GM23248 (cell line): ENCODE measurements at regions of chrX and their contacts with region 1.

Region 1: GRCh38 chrX:138775517-138775916 is 64.0 kb upstream of the FGF13 start:
- DNase-seq: peak; percentile 63
- H3K4me3 ChIP-seq: no peak overlapping the region
- H3K27ac ChIP-seq: no peak overlapping the region
- H3K4me1 ChIP-seq: peaks cover 5% of the 10 kb centered on the region; the same call in 1 of the 2 replicates
- H3K27me3 ChIP-seq: no peaks in the 10 kb centered on the region

Region 2: DNA sequence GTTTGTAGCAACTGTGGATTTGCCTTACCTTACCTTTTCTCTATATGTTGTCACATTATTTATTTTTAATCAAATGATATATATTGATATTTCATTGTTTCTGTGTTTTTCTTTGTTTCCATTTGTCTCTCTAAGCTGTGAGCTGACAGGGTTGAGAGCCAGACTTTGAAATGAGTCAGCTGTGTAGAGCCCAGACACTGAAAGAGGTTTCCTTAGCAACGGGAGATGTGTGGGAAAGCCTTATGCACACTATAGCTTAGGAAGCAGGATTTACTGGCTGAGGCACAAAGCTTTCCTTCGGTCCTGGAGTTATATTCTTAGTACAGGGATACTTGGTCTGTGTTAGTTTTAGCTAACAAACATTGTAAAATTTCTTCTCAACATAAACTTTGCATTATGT is 256.2 kb before region 1 on chrX:
- in situ Hi-C with region 1: no loop called
- DNase-seq: peak; percentile 9
- H3K4me3 ChIP-seq: no peak overlapping the region
- H3K27ac ChIP-seq: no peak overlapping the region
- H3K4me1 ChIP-seq: no peaks in the 10 kb centered on the region
- H3K27me3 ChIP-seq: no peaks in the 10 kb centered on the region

Region 3: DNA sequence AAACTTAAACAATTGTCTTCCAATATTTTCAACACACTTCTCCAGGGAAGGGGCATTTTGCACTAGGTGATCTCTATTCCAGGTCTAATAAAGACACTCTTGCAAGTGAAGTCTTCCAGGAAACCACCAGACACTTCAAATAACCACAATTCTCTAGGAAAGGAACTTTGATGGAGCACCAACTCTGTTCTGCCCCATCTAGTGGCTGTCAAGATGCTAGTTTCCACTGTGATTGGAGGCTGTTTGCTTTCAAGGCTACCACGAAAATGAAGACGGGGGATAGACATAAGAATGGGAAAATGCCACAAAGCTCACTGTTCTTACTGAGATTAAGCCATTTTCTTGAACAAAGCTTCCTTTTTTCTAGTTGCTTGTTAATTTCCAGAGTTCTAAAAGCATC is 654.4 kb after region 1 on chrX:
- in situ Hi-C with region 1: loop called (anchors 25 kb)
- DNase-seq: peak; percentile 26
- H3K4me3 ChIP-seq: no peak overlapping the region
- H3K27ac ChIP-seq: no peak overlapping the region
- H3K4me1 ChIP-seq: no peaks in the 10 kb centered on the region
- H3K27me3 ChIP-seq: no peaks in the 10 kb centered on the region